ENCODE measurements at regions of chr3 and their contacts with region 1.

Region 1: DNA sequence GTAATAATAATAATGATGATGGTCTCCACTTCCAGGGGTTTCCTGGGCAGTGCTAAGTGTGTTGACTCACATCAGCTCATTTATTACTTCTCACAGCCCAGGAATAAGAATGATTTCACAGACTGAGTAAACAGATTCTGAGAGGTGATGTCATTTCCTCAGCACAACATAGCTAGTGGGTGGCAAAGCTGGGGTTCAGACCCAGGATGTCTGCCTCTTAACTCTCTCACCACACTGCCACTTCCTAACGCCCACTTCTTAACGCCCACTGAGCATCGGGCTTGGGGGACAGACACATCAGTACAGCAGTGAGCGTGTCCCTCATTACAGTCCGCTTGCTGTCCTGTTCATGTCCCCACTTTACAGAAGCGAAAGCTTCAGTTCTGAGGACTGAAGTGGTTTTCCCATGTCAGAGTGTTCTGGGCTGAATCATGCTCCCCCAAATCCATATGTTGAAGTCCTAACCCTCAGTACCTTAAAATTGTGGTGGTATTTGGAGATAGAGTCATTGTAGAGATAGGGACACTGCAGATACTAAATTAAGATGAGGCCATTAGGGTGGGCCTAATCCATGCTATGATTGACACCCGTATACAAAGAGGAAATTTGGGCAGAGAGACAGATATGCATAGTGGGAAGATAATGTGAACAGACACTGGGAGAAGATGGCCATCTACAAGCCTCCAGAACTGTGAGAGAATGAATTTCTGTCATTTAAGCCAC is 68.0 kb downstream of the ATP2B2 start:
- DNase-seq: peak; percentile 85
- ATAC-seq: peak; percentile 43; the same call in 1 of the 2 replicates
- H3K4me3 ChIP-seq: no peak overlapping the region
- H3K27ac ChIP-seq: no peak overlapping the region; the same call in 1 of the 2 replicates
- H3K4me1 ChIP-seq: peaks cover 16% of the 10 kb centered on the region
- H3K27me3 ChIP-seq: no peaks in the 10 kb centered on the region; the same call in 1 of the 2 replicates
- CTCF ChIP-seq: no peak
- POLR2A ChIP-seq: peak; percentile 28; the same call in 1 of the 2 replicates
- RAD21 ChIP-seq: no peak

Region 2: GRCh38 chr3:10352146-10352911 is 85.1 kb before region 1 on chr3:
- CTCF ChIA-PET with region 1: no interaction called
- POLR2A ChIA-PET with region 1: no interaction called
- dilution Hi-C with region 1: no loop called
- in situ Hi-C with region 1: no loop called
- intact Hi-C with region 1: loop called (anchors 2 kb)
- DNase-seq: peak; percentile 98
- ATAC-seq: peak; percentile 85
- H3K4me3 ChIP-seq: no peak overlapping the region
- H3K27ac ChIP-seq: peak overlapping the region; percentile 62
- H3K4me1 ChIP-seq: peaks cover 34% of the 10 kb centered on the region
- H3K27me3 ChIP-seq: no peaks in the 10 kb centered on the region
- CTCF ChIP-seq: peak; percentile 30; the same call in 1 of the 2 replicates
- POLR2A ChIP-seq: 0 out of 2 replicates have a peak, but pooled peaks have one; percentile 16
- RAD21 ChIP-seq: peak; percentile 44; the same call in 1 of the 2 replicates

Region 3: GRCh38 chr3:10366651-10367101 is 70.8 kb before region 1 on chr3:
- CTCF ChIA-PET with region 1: no interaction called
- POLR2A ChIA-PET with region 1: no interaction called
- dilution Hi-C with region 1: no loop called
- in situ Hi-C with region 1: loop called (anchors 5 kb)
- intact Hi-C with region 1: loop called (anchors 5 kb)
- DNase-seq: peak; percentile 100
- ATAC-seq: peak; percentile 86
- H3K4me3 ChIP-seq: no peak overlapping the region
- H3K27ac ChIP-seq: peak overlapping the region; percentile 42
- H3K4me1 ChIP-seq: peaks cover 21% of the 10 kb centered on the region
- H3K27me3 ChIP-seq: no peaks in the 10 kb centered on the region
- CTCF ChIP-seq: 0 out of 2 replicates have a peak, but pooled peaks have one; percentile 23
- POLR2A ChIP-seq: 0 out of 2 replicates have a peak, but pooled peaks have one; percentile 22
- RAD21 ChIP-seq: peak; percentile 37

Measured in IMR-90 (cell line).